Calu3 (cell line): ENCODE measurements at regions of chr1 and their contacts with region 1.

Region 1: DNA sequence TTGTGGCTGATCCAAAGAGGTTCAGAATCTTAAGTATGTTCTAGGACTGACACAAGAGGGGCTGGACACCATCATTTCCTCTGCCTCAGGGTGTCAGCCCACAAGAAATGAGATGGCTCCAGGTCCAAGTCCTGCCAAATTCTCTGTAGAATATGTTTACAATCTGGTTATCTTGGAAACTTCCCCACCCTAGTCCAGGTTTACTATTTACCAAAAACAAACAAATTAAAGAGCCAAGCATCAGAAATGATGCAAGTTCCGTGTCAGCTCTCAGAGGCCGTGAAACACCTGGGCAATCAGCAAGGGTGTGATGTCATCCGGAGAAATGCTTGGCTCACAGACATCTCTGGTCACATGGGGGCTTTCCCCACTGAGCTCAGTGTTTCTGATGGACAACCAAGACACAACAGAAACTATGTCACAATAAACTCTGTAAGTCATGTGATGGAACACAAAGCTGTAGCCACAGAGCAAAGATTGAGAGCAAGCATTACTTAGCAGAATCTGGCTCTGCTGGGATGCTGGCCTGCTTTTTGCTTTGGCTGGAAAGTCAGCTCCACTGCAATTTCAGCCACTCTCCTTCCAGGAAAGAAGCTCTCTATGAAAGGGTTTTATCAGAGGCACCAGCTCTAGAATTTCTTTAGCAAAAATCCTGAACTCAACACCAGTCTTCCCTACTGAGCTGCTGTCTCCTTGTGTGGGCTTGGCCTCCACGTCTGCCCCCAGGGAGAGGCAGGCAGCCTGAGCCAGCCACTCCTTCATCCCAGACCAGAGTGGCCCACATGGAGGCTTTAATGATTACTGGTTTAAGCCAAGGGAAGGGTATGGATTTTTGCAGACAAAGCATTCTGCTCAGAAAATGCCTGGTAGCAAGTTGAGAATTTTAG is 55.9 kb downstream of the NENF start:
- DNase-seq: peak; percentile 83
- H3K4me3 Mint-ChIP-seq: peak overlapping the region; percentile 47
- H3K27ac Mint-ChIP-seq: peak overlapping the region; percentile 94
- H3K4me1 Mint-ChIP-seq: peaks cover 57% of the 10 kb centered on the region
- H3K27me3 Mint-ChIP-seq: no peaks in the 10 kb centered on the region
- CTCF ChIP-seq: no peak

Region 2: DNA sequence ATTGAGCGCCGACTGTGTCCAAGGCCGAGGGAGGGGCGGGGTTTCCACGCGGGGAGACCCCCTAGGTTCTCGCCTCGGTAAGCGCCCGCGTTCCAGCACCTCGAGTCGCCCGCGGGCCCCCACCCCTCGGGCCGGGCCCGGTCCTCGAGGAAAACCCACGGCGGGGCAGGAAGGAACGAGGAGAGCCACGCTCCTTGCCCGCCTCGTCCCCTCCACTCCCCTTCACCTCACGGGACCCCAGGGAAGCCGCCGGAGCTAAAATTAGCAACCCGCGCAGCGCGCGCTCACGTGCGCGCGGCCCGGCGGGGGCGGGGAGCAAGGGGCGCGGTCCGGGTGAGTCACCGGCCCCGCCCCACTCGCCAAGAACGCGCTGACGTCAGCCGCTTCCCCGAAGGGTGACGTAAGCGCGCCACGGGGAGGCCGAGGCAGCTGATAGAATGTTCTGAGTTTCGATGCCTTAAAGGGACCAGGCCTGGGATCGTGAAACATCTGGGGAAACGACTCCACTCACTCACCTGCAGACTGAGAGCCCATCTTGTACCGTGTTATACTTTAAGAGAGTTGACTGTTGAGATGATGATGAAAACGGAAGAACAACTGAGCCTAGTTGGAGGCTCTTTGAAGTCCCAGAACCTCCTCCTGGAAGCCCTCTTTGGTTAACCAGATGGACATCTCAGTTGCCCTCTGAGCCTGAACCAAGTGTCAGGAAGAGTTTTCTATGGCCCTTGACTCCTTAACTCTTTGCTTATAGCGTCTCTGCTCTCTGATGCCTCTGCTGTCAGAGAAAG is 70.2 kb after region 1 on chr1:
- CTCF ChIA-PET with region 1: no interaction called
- intact Hi-C with region 1: loop called (anchors 2 kb)
- DNase-seq: peak; percentile 91
- H3K4me3 Mint-ChIP-seq: peak overlapping the region; percentile 72
- H3K27ac Mint-ChIP-seq: peak overlapping the region; percentile 95
- H3K4me1 Mint-ChIP-seq: peaks cover 31% of the 10 kb centered on the region
- H3K27me3 Mint-ChIP-seq: no peaks in the 10 kb centered on the region
- CTCF ChIP-seq: no peak

Region 3: GRCh38 chr1:212595787-212596714 is 107.4 kb after region 1 on chr1:
- CTCF ChIA-PET with region 1: no interaction called
- intact Hi-C with region 1: loop called (anchors 2 kb)
- DNase-seq: peak; percentile 73
- H3K4me3 Mint-ChIP-seq: peak overlapping the region; percentile 28
- H3K27ac Mint-ChIP-seq: peak overlapping the region; percentile 87
- H3K4me1 Mint-ChIP-seq: peaks cover 25% of the 10 kb centered on the region
- H3K27me3 Mint-ChIP-seq: peaks cover 26% of the 10 kb centered on the region
- CTCF ChIP-seq: peak; percentile 86

Region 4: DNA sequence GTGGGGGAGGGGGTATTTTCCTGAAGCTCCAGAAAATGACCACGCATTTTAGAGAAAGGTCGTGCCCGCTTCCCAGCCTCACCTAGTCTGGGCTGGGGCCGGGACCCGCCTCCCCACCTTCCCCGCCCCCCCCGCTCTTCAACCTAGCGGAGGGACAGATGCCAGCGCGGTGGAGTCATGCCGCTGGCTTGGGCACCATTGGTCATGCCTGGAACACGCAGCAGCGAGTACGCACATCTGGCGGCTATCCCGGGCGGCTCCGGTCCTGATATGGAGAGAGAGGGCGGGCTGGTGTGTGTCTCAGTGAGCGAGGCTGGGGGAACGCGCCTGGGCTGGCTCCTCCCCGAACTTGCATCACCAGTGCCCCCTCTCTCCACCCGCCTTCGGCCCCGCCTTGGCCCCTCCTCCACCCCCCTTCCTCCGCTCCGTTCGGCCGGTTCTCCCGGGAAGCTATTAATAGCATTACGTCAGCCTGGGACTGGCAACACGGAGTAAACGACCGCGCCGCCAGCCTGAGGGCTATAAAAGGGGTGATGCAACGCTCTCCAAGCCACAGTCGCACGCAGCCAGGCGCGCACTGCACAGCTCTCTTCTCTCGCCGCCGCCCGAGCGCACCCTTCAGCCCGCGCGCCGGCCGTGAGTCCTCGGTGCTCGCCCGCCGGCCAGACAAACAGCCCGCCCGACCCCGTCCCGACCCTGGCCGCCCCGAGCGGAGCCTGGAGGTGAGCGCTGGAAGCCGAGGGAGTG is 119.7 kb after region 1 on chr1 and contains the start of gene ATF3:
- CTCF ChIA-PET with region 1: interaction called, 4 read pairs
- intact Hi-C with region 1: loop called (anchors 1 kb)
- DNase-seq: peak; percentile 99
- H3K4me3 Mint-ChIP-seq: peak within 1 kb of the TSS; percentile 82
- H3K27ac Mint-ChIP-seq: peak within 1 kb of the TSS; percentile 95
- H3K4me1 Mint-ChIP-seq: peaks cover 36% of the 10 kb centered on the region
- H3K27me3 Mint-ChIP-seq: peaks cover 65% of the 10 kb centered on the region
- CTCF ChIP-seq: no peak
- total RNA-seq, gene ATF3: 11.1 and 13.0 TPM in 2 replicates